ENCODE measurements at regions of chr7 and their contacts with region 1.

Region 1: GRCh38 chr7:20030915-20031362 is 186.2 kb downstream of the MACC1 start:
- DNase-seq: peak; percentile 86
- ATAC-seq: peak; percentile 98
- H3K4me3 ChIP-seq: peak overlapping the region; percentile 12; the same call in 1 of the 2 replicates
- H3K27ac ChIP-seq: peak overlapping the region; percentile 52
- H3K4me1 ChIP-seq: peaks cover 21% of the 10 kb centered on the region
- H3K27me3 ChIP-seq: no peaks in the 10 kb centered on the region
- CTCF ChIP-seq: no peak

Region 2: GRCh38 chr7:19999681-20000080 is 31.3 kb before region 1 on chr7:
- CTCF ChIA-PET with region 1: no interaction called
- POLR2A ChIA-PET with region 1: no interaction called
- intact Hi-C with region 1: no loop called
- DNase-seq: no peak
- ATAC-seq: no peak
- H3K4me3 ChIP-seq: no peak overlapping the region
- H3K27ac ChIP-seq: no peak overlapping the region
- H3K4me1 ChIP-seq: no peaks in the 10 kb centered on the region
- H3K27me3 ChIP-seq: no peaks in the 10 kb centered on the region
- CTCF ChIP-seq: no peak

Region 3: GRCh38 chr7:20013536-20013935 is 17.4 kb before region 1 on chr7:
- CTCF ChIA-PET with region 1: no interaction called
- POLR2A ChIA-PET with region 1: interaction called, 3 read pairs
- intact Hi-C with region 1: loop called (anchors 2 kb)
- DNase-seq: no peak
- ATAC-seq: no peak
- H3K4me3 ChIP-seq: no peak overlapping the region
- H3K27ac ChIP-seq: no peak overlapping the region
- H3K4me1 ChIP-seq: peaks cover 5% of the 10 kb centered on the region; the same call in 1 of the 2 replicates
- H3K27me3 ChIP-seq: no peaks in the 10 kb centered on the region
- CTCF ChIP-seq: no peak

Region 4: DNA sequence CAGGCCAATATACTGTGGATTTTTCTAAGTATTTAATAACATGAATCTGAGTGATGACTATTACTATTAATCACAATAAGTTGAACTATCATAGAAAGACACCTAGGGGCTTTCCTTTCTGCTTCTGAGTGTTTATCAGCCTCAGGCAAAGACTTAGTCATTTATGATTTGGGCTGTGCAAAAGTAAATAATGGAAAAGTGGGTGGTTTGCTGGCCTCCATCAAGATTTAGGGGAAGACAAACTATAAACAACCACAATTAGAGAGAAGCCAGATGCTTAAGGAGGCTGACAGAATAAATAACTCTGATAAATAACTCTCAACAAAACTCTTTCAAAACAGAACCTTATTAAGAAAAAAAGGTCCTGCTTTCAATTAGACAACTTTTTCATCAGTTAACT is 121.6 kb after region 1 on chr7:
- CTCF ChIA-PET with region 1: no interaction called
- POLR2A ChIA-PET with region 1: no interaction called
- intact Hi-C with region 1: loop called (anchors 1 kb)
- DNase-seq: peak; percentile 88
- ATAC-seq: peak; percentile 89
- H3K4me3 ChIP-seq: no peak overlapping the region
- H3K27ac ChIP-seq: peak overlapping the region; percentile 78
- H3K4me1 ChIP-seq: peaks cover 32% of the 10 kb centered on the region
- H3K27me3 ChIP-seq: no peaks in the 10 kb centered on the region
- CTCF ChIP-seq: no peak

Region 5: GRCh38 chr7:20305726-20306125 is 274.8 kb after region 1 on chr7:
- CTCF ChIA-PET with region 1: no interaction called
- POLR2A ChIA-PET with region 1: no interaction called
- intact Hi-C with region 1: loop called (anchors 1 kb)
- DNase-seq: no peak
- ATAC-seq: no peak
- H3K4me3 ChIP-seq: no peak overlapping the region
- H3K27ac ChIP-seq: no peak overlapping the region
- H3K4me1 ChIP-seq: peaks cover 19% of the 10 kb centered on the region
- H3K27me3 ChIP-seq: no peaks in the 10 kb centered on the region
- CTCF ChIP-seq: no peak

Measured in PC-3 (cell line).